PC-9 (cell line): ENCODE measurements at regions of chr12 and their contacts with region 1.

Region 1: DNA sequence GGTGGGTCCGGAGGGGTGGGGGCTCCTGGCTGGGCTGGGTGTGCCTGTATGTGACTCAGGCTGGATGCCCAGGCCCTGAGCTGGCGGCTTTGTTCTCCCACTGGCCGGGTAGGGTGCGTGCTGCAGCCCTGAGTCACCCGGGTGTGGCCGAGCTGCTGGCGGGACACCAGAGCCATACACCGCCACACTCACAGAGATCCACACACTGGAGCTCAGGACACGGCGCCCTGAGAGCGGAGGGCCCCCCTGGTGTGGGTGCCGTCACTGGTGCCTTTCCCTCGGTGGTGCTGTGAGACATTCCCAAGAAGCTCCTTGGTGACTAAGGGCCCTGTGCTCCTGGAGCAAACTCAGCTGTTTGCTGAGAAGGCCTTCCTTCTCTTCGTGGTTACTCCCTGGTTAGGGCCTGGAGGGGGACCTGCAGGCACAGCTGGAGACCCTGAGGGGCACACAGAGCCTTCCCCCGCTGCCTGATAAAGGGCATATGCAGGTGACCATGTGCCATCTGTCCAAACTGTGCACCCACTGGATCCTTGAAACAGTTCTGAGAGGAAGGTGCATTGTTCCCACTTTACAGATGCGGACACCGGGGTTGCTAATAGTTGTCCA is 44.3 kb downstream of the KRT80 start:
- DNase-seq: peak; percentile 96 to 99
- H3K4me3 ChIP-seq: peak overlapping the region; percentile 99; the same call in 1 of the 2 replicates
- H3K27ac ChIP-seq: peak overlapping the region; percentile 100
- H3K4me1 ChIP-seq: peaks cover 70% of the 10 kb centered on the region
- H3K27me3 ChIP-seq: no peaks in the 10 kb centered on the region
- CTCF ChIP-seq: no peak

Region 2: DNA sequence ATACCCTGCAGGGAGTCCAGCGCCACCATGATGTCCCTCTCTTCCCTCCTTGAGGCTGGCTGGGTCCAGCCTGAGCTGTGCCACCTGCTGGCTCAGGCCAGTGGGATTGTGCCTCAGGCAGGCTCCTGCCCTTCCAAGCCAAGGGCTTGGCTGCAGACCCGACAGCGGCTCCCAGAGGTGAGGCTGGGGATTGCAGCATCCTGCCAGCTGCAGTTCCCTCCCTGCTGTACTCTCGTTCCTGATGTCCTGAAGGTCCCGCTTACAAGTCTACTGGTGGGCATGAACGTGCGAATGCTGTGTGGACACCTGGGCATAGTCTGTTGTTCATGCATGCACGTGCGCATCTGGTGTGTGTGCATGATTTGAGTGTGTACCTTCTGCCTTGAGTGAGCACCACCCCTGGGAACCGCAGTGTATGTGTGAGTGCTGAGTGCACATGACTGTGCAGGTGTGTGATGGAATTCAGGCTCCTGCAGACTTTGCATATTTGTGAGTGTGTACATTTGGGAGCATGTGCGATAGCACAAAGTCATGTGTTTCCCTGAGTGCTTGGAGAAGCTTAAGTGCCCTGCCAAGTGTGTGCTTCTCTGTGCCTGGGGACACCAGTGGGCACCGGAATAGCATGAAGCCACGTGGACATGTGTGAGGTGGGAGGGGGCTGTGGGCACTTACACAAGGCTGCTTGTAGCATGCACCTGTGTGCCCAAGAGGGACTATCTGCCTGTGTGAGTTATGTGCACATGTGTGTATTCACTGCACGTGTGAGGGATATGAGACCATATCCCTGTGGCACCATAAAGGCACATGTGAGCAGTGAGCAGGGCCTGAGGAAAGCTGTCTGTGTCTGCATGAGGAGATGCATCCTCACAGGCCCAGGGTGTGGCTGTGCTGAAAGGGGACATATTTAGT is 66.3 kb after region 1 on chr12:
- CTCF ChIA-PET with region 1: interaction called, 4 read pairs
- POLR2A ChIA-PET with region 1: interaction called, 13 read pairs
- intact Hi-C with region 1: loop called (anchors 1 kb)
- DNase-seq: peak; percentile 79 to 93
- H3K4me3 ChIP-seq: no peak overlapping the region
- H3K27ac ChIP-seq: peak overlapping the region; percentile 85
- H3K4me1 ChIP-seq: peaks cover 56% of the 10 kb centered on the region
- H3K27me3 ChIP-seq: no peaks in the 10 kb centered on the region
- CTCF ChIP-seq: peak; percentile 98

Region 3: DNA sequence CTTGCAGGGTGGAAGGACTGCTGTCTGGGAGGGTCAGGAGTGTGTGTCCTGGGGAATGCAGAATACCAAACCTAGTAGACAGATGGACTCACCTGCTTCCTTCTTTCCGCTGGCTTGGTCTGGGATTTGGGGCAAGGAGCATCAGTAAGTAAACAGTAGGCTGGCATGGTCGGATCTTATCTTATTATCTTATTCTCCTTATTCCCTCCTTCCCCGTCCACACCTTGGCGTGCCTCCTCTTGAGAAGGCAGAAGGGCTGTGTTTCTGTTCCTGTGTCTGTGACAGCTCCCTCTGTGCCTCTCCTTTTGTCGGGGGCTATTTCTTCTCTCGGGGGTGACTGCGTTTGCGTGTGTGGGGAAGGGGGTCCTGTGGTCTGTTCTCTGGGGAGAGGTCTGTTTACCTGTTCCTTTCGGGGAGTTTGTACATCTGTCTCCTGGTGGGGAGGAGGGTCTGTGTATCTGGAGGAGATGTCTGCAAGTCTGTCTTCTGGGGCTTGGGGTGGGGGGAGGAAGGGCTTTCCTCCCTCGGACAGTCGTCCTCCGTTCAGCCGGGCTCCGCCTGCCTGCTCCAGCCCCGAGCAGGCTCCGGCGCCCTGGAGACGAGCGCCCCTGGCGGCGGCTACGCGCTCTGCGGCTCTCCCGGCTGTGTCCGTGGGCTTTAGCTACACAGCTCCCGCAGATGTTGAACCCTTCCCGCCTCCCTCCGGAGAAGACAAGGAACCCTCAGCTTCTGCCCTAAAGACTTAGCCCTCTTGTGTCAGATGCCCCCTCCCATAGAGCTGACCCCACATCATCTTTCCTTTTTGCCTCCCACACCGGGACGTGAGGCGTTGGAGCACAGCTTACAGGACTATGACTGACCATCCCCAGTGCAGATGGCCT is 131.3 kb after region 1 on chr12:
- CTCF ChIA-PET with region 1: no interaction called
- POLR2A ChIA-PET with region 1: interaction called, 51 read pairs
- intact Hi-C with region 1: loop called (anchors 1 kb)
- DNase-seq: peak; percentile 83 to 86
- H3K4me3 ChIP-seq: peak overlapping the region; percentile 78
- H3K27ac ChIP-seq: peak overlapping the region; percentile 100
- H3K4me1 ChIP-seq: peaks cover 60% of the 10 kb centered on the region
- H3K27me3 ChIP-seq: no peaks in the 10 kb centered on the region
- CTCF ChIP-seq: peak; percentile 95

Region 4: GRCh38 chr12:52672321-52672933 is 525.0 kb after region 1 on chr12:
- CTCF ChIA-PET with region 1: no interaction called
- POLR2A ChIA-PET with region 1: interaction called, 3 read pairs
- intact Hi-C with region 1: loop called (anchors 5 kb)
- DNase-seq: peak; percentile 55 to 98
- H3K4me3 ChIP-seq: no peak overlapping the region
- H3K27ac ChIP-seq: peak overlapping the region; percentile 86
- H3K4me1 ChIP-seq: peaks cover 35% of the 10 kb centered on the region
- H3K27me3 ChIP-seq: no peaks in the 10 kb centered on the region
- CTCF ChIP-seq: no peak

Region 5: GRCh38 chr12:52924764-52925716 is 777.6 kb after region 1 on chr12:
- CTCF ChIA-PET with region 1: no interaction called
- POLR2A ChIA-PET with region 1: interaction called, 29 read pairs
- intact Hi-C with region 1: loop called (anchors 5 kb)
- DNase-seq: peak; percentile 78 to 94
- H3K4me3 ChIP-seq: peak overlapping the region; percentile 53
- H3K27ac ChIP-seq: peak overlapping the region; percentile 100
- H3K4me1 ChIP-seq: peaks cover 80% of the 10 kb centered on the region
- H3K27me3 ChIP-seq: no peaks in the 10 kb centered on the region
- CTCF ChIP-seq: no peak

Region 6: DNA sequence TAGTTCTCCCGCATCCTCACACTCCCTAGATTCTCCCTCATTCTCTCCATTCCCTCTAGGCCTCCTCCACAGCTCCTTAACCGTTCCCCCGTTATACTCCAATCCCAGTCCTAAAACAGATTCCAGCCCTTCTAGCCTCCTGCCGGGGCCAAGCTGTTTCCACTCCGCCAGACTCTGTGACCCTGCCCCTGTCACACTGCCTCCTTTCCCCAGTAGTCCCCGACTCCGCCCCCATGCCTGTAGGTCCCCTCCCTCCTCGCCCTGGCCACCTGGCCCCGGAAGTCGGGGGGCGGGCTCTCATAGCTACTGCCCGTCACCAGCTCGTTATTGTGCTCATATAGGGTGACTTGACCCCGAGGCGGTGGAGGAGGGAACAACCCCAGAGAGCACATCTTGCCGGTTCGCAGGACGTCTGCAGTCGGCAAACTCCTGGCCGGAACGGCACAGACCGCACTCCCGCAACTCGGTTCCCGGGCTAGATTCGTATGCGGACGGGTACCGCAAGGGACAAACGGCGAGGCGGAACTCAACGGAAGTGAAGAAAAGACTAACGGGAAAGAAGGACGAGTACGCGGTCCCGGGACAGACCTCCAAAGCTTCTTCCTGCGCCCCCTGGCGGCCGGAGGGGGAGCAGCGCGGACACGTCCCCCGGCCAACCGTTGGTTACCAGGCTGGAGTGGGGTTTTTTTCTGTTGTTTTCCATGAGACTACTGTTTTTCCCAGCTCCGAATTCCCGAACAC is 1173.8 kb after region 1 on chr12 and contains the start of gene AAAS:
- CTCF ChIA-PET with region 1: no interaction called
- POLR2A ChIA-PET with region 1: interaction called, 15 read pairs
- intact Hi-C with region 1: no loop called
- DNase-seq: peak; percentile 90 to 96
- H3K4me3 ChIP-seq: peak within 1 kb of the TSS; percentile 87
- H3K27ac ChIP-seq: peak within 1 kb of the TSS; percentile 56
- H3K4me1 ChIP-seq: peaks cover 16% of the 10 kb centered on the region
- H3K27me3 ChIP-seq: no peaks in the 10 kb centered on the region
- CTCF ChIP-seq: peak; percentile 96
- total RNA-seq, gene AAAS: 53.4 and 67.3 TPM in 2 replicates